Spleen (tissue), 13 donors: ENCODE measurements at regions of chr3 and their contacts with region 1.

Region 1: GRCh38 chr3:48492543-48493501 is 11.2 kb downstream of the SHISA5 start:
- DNase-seq: no peak
- H3K4me3 ChIP-seq: no peak overlapping the region
- H3K27ac ChIP-seq: peak overlapping the region in 3 of 8 donors; percentile 32 to 42 (median 33)
- H3K4me1 ChIP-seq: peaks cover 0 to 12% (median 9%) of the 10 kb centered on the region in 6 donors
- H3K27me3 ChIP-seq: no peaks in the 10 kb centered on the region
- CTCF ChIP-seq: no peak
- POLR2A ChIP-seq: no peak

Region 2: GRCh38 chr3:48536785-48537184 is 44.0 kb after region 1 on chr3:
- intact Hi-C with region 1: loop called (anchors 2 kb)
- DNase-seq: no peak
- H3K4me3 ChIP-seq: no peak overlapping the region
- H3K27ac ChIP-seq: peak overlapping the region in 5 of 8 donors; percentile 46 to 84 (median 68)
- H3K4me1 ChIP-seq: peaks cover 0 to 59% (median 9%) of the 10 kb centered on the region in 6 donors
- H3K27me3 ChIP-seq: no peaks in the 10 kb centered on the region
- CTCF ChIP-seq: no peak
- POLR2A ChIP-seq: no peak